Ascending aorta (tissue), 2 donors: ENCODE measurements at regions of chr2 and their contacts with region 1.

Region 1: DNA sequence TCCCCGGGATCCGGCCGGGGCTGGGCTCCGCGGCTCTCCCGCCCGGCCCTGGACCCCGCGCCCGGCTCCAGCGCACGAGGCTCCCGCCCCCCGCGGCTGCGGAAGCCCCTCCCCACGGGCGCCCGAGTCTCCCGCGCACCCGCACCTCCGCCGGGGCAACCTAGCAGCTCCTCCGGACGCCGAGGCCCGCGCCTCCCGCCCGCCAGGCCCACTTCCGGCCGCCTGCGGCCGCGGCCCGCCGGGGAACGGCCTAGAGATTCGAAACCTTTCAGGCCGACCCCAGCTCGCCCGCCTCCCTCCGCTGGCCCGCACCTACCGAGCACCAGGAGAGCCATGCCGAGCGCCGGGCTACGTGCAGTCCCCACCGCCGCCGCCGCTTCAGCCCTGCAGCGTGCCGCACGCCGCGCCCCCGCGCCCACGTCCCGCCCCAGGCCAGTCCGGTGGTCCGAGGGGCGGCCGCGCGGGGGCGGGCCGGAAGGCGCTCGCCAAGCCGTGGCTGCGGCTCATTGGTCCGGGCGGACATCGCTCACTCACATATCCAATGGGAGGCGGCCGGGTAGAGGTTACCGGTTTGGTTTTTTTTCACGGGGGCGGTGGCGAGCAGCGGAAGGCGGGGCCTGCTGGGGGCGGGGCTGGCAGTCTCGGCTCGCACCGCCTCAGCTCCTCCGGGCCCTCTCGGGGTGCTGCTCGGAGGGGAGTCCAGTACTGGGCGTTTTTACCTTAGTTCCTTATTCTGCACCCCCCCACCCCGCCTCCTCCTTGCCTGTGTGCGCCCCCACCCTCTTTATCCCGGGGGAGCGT is at the start of gene PDIA6:
- DNase-seq: peak; percentile 89 to 98
- H3K4me3 ChIP-seq: peak within 1 kb of the TSS; percentile 68 to 74
- H3K27ac ChIP-seq: peak within 1 kb of the TSS; percentile 71 to 81
- H3K4me1 ChIP-seq: peaks cover 0 to 20% of the 10 kb centered on the region in 2 donors
- H3K27me3 ChIP-seq: no peaks in the 10 kb centered on the region
- CTCF ChIP-seq: peak in 1 of 3 experiments; percentile 43
- total RNA-seq, gene PDIA6: 56.4 TPM

Region 2: DNA sequence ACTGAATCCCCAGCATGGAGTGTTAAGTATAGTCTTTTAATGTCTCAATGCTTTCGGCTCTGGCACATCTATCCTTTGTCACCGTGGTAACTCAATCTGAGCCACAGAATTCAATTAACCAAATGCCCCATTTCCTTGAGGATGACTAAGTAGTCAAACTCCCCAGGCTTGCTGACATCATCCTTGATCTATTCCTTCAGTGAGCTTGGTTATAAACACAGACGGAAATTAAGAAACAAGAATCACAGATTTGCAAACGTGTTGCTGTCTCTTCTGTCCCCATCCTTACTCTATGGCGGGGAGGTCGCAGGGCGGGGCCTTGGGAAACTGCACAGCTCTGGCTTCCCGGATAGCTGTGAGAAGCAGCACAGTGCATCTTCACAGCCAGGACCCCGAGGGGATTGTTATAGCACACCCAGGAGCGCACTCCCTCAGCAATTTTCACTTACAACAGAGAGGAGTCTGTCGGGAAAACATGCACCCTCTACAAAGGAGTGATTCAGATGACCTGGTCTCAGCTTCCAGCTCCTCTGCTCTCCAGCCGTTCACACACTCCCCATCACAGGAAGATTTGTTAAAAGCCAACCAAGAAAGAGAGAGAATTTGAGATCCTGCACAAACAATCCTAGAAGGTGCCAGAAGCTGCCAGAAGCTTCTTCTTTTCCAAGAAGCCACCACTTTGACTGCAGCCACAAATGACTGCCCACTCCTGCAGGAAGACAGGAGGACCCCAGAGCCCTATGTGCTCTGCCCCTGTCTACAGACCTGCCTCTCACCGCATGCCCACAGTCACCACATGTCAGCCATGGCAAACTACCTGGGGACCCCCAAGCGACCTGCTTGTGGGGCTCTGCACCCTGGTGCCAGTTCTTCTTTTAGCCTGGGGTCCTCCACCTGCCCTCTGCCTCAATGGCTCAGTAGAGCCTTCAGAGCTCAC is 1136.9 kb before region 1 on chr2:
- intact Hi-C with region 1: no loop called
- DNase-seq: no peak
- H3K4me3 ChIP-seq: no peak overlapping the region
- H3K27ac ChIP-seq: no peak overlapping the region
- H3K4me1 ChIP-seq: no peaks in the 10 kb centered on the region
- H3K27me3 ChIP-seq: no peaks in the 10 kb centered on the region
- CTCF ChIP-seq: no peak

Region 3: GRCh38 chr2:10408649-10409579 is 403.6 kb before region 1 on chr2:
- intact Hi-C with region 1: loop called (anchors 5 kb)
- DNase-seq: peak in 1 of 2 donors; percentile 86
- H3K4me3 ChIP-seq: no peak overlapping the region
- H3K27ac ChIP-seq: peak overlapping the region in 1 of 2 donors; percentile 52
- H3K4me1 ChIP-seq: peaks cover 24 to 43% of the 10 kb centered on the region in 2 donors
- H3K27me3 ChIP-seq: no peaks in the 10 kb centered on the region
- CTCF ChIP-seq: peak; percentile 91 to 94 (median 91)

Region 4: GRCh38 chr2:10688921-10689807 is 123.4 kb before region 1 on chr2:
- intact Hi-C with region 1: loop called (anchors 1 kb)
- DNase-seq: no peak
- H3K4me3 ChIP-seq: peak overlapping the region; percentile 90 to 99
- H3K27ac ChIP-seq: peak overlapping the region; percentile 94 to 97
- H3K4me1 ChIP-seq: peaks cover 0 to 6% of the 10 kb centered on the region in 2 donors
- H3K27me3 ChIP-seq: no peaks in the 10 kb centered on the region
- CTCF ChIP-seq: no peak

Region 5: GRCh38 chr2:10971881-10972260 is 159.3 kb after region 1 on chr2:
- intact Hi-C with region 1: no loop called
- DNase-seq: no peak
- H3K4me3 ChIP-seq: no peak overlapping the region
- H3K27ac ChIP-seq: no peak overlapping the region
- H3K4me1 ChIP-seq: no peaks in the 10 kb centered on the region
- H3K27me3 ChIP-seq: no peaks in the 10 kb centered on the region
- CTCF ChIP-seq: no peak

Region 6: DNA sequence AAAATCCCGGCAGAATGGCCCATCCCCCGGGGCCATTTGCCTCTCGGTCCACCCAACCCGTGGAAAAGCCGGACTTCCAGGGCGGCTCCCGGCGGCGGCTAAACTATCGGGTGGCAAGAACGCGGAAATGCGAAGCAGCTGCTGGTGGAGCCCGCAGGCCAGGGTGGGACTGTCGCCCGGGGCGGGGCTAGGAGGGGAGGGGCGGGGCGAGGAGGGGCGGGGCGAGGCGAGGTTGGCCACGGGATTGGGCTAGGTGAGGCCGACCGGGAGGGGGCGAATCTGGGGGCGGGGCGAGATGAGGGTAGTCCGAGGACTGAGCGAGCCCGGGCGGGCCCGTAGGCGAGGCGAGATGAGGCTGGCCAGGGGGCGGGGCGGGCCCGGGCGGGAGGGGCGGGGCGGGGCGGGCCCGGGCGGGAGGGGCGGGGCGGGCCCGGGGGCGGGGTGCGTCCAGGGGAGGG is 342.4 kb after region 1 on chr2:
- intact Hi-C with region 1: loop called (anchors 2 kb)
- DNase-seq: peak; percentile 88 to 98
- H3K4me3 ChIP-seq: peak overlapping the region; percentile 71 to 85
- H3K27ac ChIP-seq: peak overlapping the region; percentile 96
- H3K4me1 ChIP-seq: peaks cover 4 to 18% of the 10 kb centered on the region in 2 donors
- H3K27me3 ChIP-seq: no peaks in the 10 kb centered on the region
- CTCF ChIP-seq: no peak

Region 7: GRCh38 chr2:11743846-11744553 is 931.4 kb after region 1 on chr2:
- intact Hi-C with region 1: loop called (anchors 2 kb)
- DNase-seq: peak; percentile 94 to 99
- H3K4me3 ChIP-seq: peak overlapping the region; percentile 29 to 47
- H3K27ac ChIP-seq: peak overlapping the region; percentile 53 to 64
- H3K4me1 ChIP-seq: peaks cover 4 to 30% of the 10 kb centered on the region in 2 donors
- H3K27me3 ChIP-seq: no peaks in the 10 kb centered on the region
- CTCF ChIP-seq: peak in 1 of 3 experiments; percentile 3